Right ventricle myocardium superior (tissue), 1 donor: ENCODE measurements at regions of chr1 and their contacts with region 1.

Region 1: GRCh38 chr1:28313710-28314546 is 14.9 kb upstream of the MED18 start:
- DNase-seq: peak; percentile 56
- ATAC-seq: no peak

Region 2: DNA sequence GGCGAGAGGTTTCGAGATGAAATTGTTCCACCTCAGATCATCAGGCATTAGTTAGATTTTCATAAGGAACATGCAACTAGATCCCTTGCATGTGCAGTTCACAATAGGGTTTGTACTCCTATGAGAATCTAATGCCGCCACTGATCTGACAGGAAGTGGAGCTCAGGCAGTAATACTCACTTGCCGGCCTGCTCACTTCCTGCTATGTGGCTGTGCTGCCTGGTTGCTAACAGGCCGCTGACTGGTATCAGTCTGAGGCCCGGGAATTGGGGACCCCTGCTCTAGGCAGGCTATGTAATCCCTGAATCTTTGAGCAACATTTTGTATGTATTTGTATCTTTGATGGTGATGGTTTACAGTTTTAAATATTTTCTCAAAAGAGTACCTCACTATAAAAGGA is 321.7 kb before region 1 on chr1:
- intact Hi-C with region 1: no loop called
- DNase-seq: no peak
- ATAC-seq: no peak

Region 3: GRCh38 chr1:28259307-28260167 is 54.4 kb before region 1 on chr1 and contains the start of gene SESN2:
- intact Hi-C with region 1: loop called (anchors 10 kb)
- DNase-seq: peak; percentile 100
- ATAC-seq: peak; percentile 99
- total RNA-seq, gene SESN2: 2.6 TPM